ENCODE measurements at regions of chr1 and their contacts with region 1.

Region 1: GRCh38 chr1:165914136-165914798 is 86.9 kb downstream of the UCK2 start:
- DNase-seq: peak in 4 of 6 donors; percentile 21 to 83 (median 59)
- ATAC-seq: peak; percentile 88 to 93 (median 91)
- H3K4me3 ChIP-seq: no peak overlapping the region
- H3K27ac ChIP-seq: no peak overlapping the region
- H3K4me1 ChIP-seq: peaks cover 0 to 3% (median 0%) of the 10 kb centered on the region in 3 donors
- H3K27me3 ChIP-seq: no peaks in the 10 kb centered on the region
- CTCF ChIP-seq: peak; percentile 49 to 85 (median 70)

Region 2: DNA sequence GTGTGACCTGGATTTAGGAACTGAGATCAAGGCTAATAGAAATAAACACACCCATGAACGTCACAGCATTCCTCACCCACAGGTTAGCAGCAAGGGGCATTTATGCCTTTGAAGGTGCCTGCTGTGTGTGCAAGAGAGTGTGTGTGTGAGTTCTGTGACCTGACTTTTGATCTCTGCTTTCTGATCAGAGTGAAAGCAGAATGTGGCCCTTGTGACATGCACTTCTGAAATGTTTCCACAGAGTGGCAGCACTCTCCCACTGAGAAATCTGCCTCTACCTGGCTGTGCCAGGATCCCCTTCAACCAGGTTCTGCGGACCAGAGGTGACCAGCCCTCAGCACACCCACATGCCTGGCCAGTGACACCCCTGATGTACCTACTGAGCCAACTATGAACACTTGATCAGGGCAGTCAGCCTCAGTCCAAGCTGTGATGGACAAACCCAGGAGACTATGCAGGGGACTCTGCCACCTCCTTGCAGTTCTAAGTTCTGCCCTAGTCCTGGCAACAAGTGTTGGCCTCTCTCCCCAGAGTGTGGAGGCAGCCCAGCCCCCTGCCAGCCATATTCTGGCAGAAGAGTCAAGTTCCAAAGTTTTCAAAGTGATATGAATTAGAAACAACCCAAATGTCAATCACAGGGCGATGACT is 510.3 kb before region 1 on chr1:
- intact Hi-C with region 1: loop called in 1 of 3 experiments (anchors 10 kb)
- DNase-seq: peak in 1 of 6 donors; percentile 29
- ATAC-seq: peak in 3 of 4 donors; percentile 78 to 86 (median 85)
- H3K4me3 ChIP-seq: no peak overlapping the region
- H3K27ac ChIP-seq: no peak overlapping the region
- H3K4me1 ChIP-seq: no peaks in the 10 kb centered on the region
- H3K27me3 ChIP-seq: no peaks in the 10 kb centered on the region
- CTCF ChIP-seq: peak in 2 of 4 donors; percentile 33 to 34

Region 3: DNA sequence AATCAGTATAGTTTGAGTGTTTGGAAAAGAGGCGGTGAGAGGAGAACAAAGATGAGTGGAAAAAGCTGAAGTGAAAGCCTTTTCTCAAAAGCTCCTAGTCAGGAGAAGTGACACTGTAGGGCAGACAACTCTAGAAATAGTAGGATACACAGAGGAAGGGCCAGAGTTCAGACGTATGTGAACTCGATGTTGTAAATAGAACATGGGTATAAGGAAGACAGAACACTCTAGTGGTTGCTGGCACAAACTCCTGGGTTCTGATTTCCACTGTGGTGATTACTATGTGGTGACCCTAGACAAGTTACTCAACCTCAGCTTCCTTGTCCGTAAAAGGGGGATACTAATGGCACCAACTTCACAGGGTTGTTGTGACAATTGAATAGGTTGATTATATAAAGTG is 313.5 kb before region 1 on chr1:
- intact Hi-C with region 1: loop called in 1 of 3 experiments (anchors 5 kb)
- DNase-seq: peak in 1 of 6 donors; percentile 15
- ATAC-seq: no peak
- H3K4me3 ChIP-seq: no peak overlapping the region
- H3K27ac ChIP-seq: no peak overlapping the region
- H3K4me1 ChIP-seq: peaks cover 0 to 2% (median 0%) of the 10 kb centered on the region in 3 donors
- H3K27me3 ChIP-seq: no peaks in the 10 kb centered on the region
- CTCF ChIP-seq: no peak

Region 4: GRCh38 chr1:165707984-165708706 is 206.1 kb before region 1 on chr1:
- intact Hi-C with region 1: loop called in 2 of 3 experiments (anchors 5 to 10 kb)
- DNase-seq: no peak
- ATAC-seq: no peak
- H3K4me3 ChIP-seq: no peak overlapping the region
- H3K27ac ChIP-seq: no peak overlapping the region
- H3K4me1 ChIP-seq: no peaks in the 10 kb centered on the region
- H3K27me3 ChIP-seq: no peaks in the 10 kb centered on the region
- CTCF ChIP-seq: no peak

Region 5: GRCh38 chr1:165717918-165718515 is 196.2 kb before region 1 on chr1:
- intact Hi-C with region 1: loop called in 2 of 3 experiments (anchors 5 to 10 kb)
- DNase-seq: peak in 3 of 6 donors; percentile 21 to 49 (median 38)
- ATAC-seq: peak; percentile 66 to 86 (median 76)
- H3K4me3 ChIP-seq: no peak overlapping the region
- H3K27ac ChIP-seq: no peak overlapping the region
- H3K4me1 ChIP-seq: no peaks in the 10 kb centered on the region
- H3K27me3 ChIP-seq: no peaks in the 10 kb centered on the region
- CTCF ChIP-seq: peak in 3 of 4 donors; percentile 37 to 53 (median 39)

Measured in pancreas (tissue), 10 donors.